Posterior vena cava (tissue), 2 donors: ENCODE measurements at regions of chr6 and their contacts with region 1.

Region 1: DNA sequence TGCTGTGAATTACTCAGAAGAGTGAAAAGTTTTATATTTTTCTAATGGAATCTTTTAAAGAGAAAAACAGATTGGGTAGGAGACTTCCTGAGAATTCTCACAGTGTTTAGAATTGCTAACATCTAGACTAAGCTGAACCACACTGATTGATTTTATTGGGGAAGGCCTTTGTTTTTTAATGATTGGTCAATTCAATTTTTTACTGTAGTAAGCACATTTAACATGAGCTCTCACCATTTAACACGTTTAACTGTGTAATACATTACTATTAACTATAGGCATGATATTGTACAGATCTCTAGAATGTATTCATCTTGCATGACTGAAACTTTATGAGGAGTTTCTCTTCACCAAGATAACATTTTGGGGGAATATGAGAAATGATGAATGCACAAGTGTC is 987.3 kb downstream of the PHF3 start:
- DNase-seq: no peak

Region 2: DNA sequence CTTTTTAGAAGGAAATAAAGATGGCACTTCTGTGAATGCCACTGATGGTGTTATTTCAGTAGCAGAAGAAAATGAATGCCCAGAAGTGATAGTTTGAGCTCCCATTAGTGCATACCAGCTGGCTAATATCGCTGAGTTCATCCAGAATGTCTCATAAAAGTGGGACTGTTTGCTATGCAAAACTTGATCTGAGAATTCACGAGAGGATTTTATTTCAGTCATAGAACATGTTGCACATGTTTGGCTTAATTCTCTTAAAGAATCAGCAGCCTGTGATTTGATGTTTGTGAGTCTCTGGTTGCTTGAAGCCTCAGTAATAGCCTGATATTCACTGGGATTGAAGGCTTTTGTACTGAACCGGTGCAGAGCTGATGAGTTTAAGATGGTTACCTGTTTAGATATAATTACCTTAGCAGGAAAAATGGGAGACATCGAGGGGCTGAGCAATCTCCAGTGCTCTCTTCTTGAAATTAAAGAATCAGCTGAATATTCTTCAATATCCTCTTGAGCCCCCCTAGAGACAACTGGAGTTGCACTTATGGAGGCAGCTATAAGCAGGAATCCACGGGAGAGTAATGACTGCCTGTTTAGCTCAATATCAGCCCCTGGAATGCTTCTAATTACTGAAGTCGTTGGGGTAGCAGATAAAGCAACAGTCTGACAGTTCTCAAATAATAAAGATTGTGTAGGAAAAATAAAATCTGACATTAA is 31.8 kb before region 1 on chr6:
- intact Hi-C with region 1: loop called in 1 of 2 experiments (anchors 1 kb)
- DNase-seq: no peak